AG04449 (cell line): ENCODE measurements at regions of chr14 and their contacts with region 1.

Region 1: GRCh38 chr14:50778721-50779483 is 52.1 kb downstream of the NIN start:
- DNase-seq: no peak
- H3K4me3 ChIP-seq: no peak overlapping the region
- CTCF ChIP-seq: no peak

Region 2: DNA sequence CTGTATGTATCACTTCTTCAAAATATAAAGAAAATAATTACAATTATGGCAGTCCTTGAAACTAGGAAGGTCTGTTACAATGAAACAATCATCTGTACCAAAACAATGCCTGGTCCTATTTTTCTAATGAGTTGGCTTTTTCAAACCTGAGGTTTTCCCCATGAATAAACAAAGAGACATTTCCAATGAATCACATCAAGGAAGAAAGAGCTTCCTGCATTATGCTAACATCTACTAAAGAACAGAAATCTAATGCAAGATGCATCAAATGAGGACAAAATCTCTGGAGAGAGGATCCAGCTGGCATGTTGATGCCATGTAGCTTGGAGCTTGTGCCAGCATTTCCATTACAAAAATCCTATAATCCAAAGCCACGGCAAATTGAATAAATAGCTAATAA is 22.8 kb after region 1 on chr14:
- CTCF ChIA-PET with region 1: interaction called, 189 read pairs
- POLR2A ChIA-PET with region 1: no interaction called
- DNase-seq: no peak
- H3K4me3 ChIP-seq: no peak overlapping the region
- CTCF ChIP-seq: no peak

Region 3: GRCh38 chr14:50906326-50907065 is 127.6 kb after region 1 on chr14:
- CTCF ChIA-PET with region 1: no interaction called
- POLR2A ChIA-PET with region 1: no interaction called
- DNase-seq: no peak
- H3K4me3 ChIP-seq: no peak overlapping the region
- CTCF ChIP-seq: no peak

Region 4: GRCh38 chr14:51157012-51157411 is 378.1 kb after region 1 on chr14:
- CTCF ChIA-PET with region 1: no interaction called
- POLR2A ChIA-PET with region 1: no interaction called
- DNase-seq: no peak
- H3K4me3 ChIP-seq: no peak overlapping the region
- CTCF ChIP-seq: no peak